ENCODE measurements at regions of chr9 and their contacts with region 1.

Region 1: GRCh38 chr9:122099271-122099869 is 6.3 kb upstream of the TTLL11 start:
- DNase-seq: peak; percentile 80
- CTCF ChIP-seq: peak; percentile 89

Region 2: DNA sequence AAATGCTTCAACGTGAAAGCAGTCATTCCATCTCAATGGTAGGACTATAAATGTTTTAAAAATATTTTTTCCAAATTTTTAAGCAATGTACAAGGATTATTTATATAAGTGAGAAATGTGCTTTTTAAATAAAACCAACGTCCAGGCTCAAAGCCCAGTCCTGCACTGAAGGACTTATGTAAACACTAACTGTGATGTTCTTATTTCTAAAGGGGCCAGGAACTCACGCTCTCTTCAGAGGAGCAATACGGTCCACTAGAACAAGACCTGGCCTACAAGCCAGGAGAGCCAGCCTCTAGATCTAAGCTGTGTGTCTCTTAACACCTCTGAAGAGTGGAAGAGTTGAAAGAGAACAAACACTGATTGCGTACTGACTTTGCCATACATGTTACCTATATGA is 18.4 kb before region 1 on chr9:
- CTCF ChIA-PET with region 1: interaction called, 17 read pairs
- POLR2A ChIA-PET with region 1: no interaction called
- DNase-seq: no peak
- CTCF ChIP-seq: no peak

Region 3: DNA sequence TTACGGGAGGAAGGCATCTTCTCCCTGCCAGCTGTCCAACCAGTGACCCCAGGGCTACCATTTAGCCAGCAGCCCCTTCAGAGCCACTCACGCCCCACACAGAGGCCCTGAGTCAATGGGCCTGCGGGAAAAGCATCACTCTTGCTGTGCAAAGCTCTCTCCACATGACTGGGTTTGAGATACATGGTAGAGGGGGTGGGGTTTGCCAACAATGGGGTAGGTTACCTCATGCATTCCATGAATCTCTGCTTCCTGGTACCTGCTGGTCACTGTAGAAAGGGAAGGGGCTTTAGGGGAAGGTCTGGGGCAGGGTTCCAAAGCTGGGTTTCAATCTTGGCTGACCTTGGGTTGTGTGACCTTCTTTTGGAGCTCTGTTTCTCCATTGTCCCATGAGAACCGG is 16.7 kb after region 1 on chr9:
- CTCF ChIA-PET with region 1: interaction called, 150 read pairs
- POLR2A ChIA-PET with region 1: no interaction called
- DNase-seq: no peak
- CTCF ChIP-seq: no peak

Region 4: DNA sequence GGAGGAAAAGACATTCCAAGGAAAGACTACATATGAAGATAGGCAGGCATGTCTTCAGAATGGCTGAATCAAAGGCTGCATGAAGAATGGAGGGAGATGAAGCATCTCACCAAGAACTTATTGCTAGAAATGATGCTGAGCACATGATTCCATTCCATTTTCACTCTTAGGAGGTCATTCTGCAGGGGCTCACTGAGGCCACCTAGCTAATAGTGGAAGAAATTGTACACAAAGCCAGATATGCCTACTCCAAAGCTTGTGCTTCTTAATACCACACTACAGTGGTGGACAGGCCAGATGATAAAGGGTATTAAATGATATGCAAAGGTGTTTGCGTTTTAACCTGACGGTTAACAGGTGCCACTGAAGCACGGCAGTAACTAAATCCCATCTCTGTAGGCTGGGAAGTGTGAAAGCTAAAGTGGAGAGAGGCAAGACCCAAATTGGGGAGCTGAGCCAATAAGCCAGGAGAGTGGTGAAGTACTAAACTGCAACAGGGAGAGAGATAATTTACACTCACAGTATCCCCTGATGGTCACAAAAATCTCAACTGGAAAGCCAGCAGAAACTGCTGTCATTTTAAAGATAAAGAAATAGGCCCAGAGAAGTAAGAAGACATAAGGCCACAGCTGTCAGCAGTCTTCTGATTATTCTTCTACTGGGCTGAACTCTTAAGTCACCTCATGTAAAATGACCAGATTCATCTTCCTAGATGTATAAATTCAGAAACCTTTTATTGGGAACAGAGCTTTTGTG is 45.6 kb after region 1 on chr9:
- CTCF ChIA-PET with region 1: interaction called, 12 read pairs
- POLR2A ChIA-PET with region 1: no interaction called
- DNase-seq: no peak
- CTCF ChIP-seq: peak; percentile 38

Region 5: DNA sequence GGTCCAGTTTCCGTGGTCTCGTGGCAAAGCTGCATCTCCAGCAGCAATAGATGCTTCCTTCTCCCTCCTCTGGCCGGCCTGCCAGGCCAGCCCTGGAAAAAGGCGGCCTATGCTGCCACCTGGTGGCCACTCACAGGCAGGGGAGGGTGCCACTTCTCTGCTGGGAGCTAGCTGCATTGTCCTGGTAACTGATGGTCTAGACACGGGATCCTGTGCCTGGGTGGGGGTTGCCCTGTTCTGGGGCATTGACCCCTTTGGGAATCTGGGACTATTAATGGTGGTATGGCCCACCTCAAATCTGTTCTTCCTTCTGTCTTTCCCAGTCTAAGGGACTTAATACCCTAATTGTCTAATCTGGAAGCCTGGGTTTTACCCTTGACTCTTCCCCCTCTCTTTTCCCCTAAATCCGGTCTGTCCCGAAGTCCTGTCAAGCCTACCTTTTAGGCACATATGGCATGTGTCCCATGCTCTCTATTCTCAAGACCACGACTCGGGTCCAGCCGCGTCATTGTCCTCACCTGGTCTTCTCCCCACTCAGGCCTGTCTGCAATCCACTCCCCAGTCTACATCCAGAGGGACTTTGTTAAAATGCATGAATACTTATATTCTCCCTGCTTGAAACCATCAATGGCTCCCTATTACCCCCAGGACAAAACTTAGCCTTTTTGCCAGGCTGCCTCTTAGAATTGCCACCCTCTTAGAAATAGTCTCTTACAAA is 251.4 kb after region 1 on chr9:
- CTCF ChIA-PET with region 1: interaction called, 100 read pairs
- POLR2A ChIA-PET with region 1: no interaction called
- DNase-seq: peak; percentile 86
- CTCF ChIP-seq: peak; percentile 99

Region 6: GRCh38 chr9:122810306-122810946 is 711.1 kb after region 1 on chr9:
- CTCF ChIA-PET with region 1: interaction called, 29 read pairs
- POLR2A ChIA-PET with region 1: no interaction called
- DNase-seq: peak; percentile 82
- CTCF ChIP-seq: peak; percentile 89